Ascending aorta (tissue), 2 donors: ENCODE measurements at regions of chr14 and their contacts with region 1.

Region 1: GRCh38 chr14:77320238-77320935 is at the start of gene POMT2:
- DNase-seq: peak; percentile 80 to 97
- H3K4me3 ChIP-seq: peak within 1 kb of the TSS; percentile 76 to 99
- H3K27ac ChIP-seq: peak within 1 kb of the TSS; percentile 94 to 97
- H3K4me1 ChIP-seq: peaks cover 0 to 11% of the 10 kb centered on the region in 2 donors
- H3K27me3 ChIP-seq: no peaks in the 10 kb centered on the region
- CTCF ChIP-seq: peak in 1 of 3 experiments; percentile 56
- total RNA-seq, gene POMT2: 28.4 TPM

Region 2: DNA sequence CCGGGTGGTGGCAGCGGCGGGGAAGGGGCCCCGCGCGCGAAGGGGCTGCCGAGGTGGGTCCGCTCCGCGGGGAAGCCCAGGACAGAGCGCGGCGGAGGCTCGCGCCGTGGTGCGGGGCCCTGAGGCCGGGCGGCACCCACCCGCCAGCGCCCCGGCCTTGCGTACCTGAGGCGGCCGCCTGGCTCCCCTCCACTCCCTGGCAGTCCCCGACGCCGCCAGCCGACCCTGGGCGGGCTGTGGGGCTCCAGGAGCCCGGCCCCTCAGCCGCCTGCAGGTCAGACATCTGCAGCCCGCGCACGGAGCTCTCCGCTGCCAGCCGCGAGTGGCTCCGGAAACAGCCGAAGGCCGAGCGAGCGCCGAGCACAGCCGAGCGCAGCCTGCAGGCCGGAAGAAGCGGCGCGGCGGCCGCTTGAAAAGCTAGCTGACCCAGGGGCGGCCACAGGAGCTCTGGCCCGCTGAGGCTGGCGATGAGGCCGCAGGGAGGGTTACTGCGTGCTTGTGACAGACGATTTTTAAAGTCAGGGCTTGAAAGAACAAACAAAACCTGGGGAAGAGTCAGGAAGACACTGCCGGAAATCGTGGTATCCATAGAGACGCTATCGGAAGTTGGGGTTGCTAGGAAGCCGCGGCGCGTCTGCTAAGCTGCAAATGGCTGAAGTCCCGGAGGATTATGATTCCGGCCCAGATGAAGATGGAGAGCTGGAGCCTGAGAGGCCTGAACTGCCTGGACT is 56.5 kb after region 1 on chr14 and contains the starts of genes SAMD15 and TMED8:
- intact Hi-C with region 1: loop called (anchors 1 kb)
- DNase-seq: peak; percentile 25 to 86
- H3K4me3 ChIP-seq: peak within 1 kb of the TSS; percentile 94 to 97
- H3K27ac ChIP-seq: peak within 1 kb of the TSS; percentile 71 to 79
- H3K4me1 ChIP-seq: peaks cover 3 to 12% of the 10 kb centered on the region in 2 donors
- H3K27me3 ChIP-seq: no peaks in the 10 kb centered on the region
- CTCF ChIP-seq: peak in 2 of 3 experiments; percentile 32 to 39
- total RNA-seq, gene SAMD15: not detected
- total RNA-seq, gene TMED8: 3.7 TPM

Region 3: DNA sequence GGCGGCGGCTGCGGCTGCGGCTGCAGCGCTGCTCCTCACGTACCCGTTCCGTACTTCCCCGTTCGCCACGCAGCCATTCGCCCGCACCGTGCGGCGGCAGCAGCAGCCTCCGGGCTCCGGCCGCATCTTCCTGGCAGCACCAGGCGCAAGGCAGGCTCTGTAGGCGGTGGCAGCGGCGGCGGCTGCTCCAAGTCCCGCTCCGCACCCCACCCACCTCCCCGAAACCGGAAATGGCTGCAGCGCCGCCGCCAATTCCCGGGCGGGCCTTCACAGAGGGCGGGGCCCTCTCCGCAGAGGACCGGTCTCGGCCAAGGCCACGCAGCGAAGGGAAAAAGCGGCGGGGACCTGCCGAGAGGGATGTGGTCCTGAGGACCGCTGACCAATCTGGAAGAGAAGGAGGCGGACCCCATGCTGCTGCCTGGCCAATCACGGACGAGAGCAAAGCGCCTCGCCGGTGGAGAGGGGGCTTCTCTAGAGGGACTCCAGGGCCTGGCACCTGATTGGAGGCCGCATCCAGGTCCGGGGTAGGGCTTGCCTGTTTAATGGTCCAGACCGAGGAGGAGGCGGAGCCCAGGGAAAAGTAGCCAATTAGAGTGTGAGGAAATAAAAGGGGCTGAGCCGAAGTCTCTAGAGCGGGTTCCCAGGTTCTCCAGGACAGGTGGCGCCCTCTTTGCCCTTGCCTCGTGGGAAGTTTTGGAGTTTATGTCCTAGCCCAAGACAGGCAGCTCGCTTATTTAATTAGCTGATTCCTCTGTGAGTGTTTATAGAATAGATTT is 296.3 kb after region 1 on chr14 and contains the start of gene SPTLC2:
- intact Hi-C with region 1: loop called (anchors 2 kb)
- DNase-seq: peak; percentile 98 to 100
- H3K4me3 ChIP-seq: peak within 1 kb of the TSS; percentile 84 to 91
- H3K27ac ChIP-seq: peak within 1 kb of the TSS; percentile 71 to 76
- H3K4me1 ChIP-seq: peaks cover 5 to 6% of the 10 kb centered on the region in 2 donors
- H3K27me3 ChIP-seq: no peaks in the 10 kb centered on the region
- CTCF ChIP-seq: no peak
- total RNA-seq, gene SPTLC2: 25.7 TPM

Region 4: GRCh38 chr14:77760381-77761246 is 440.2 kb after region 1 on chr14 and contains the start of gene SNW1:
- intact Hi-C with region 1: loop called (anchors 2 kb)
- DNase-seq: peak; percentile 84 to 96
- H3K4me3 ChIP-seq: peak within 1 kb of the TSS; percentile 71 to 99
- H3K27ac ChIP-seq: peak within 1 kb of the TSS; percentile 92 to 99
- H3K4me1 ChIP-seq: peaks cover 19% of the 10 kb centered on the region in 2 donors
- H3K27me3 ChIP-seq: no peaks in the 10 kb centered on the region
- CTCF ChIP-seq: no peak
- total RNA-seq, gene SNW1: 16.8 TPM